ENCODE measurements at regions of chr11 and their contacts with region 1.

Region 1: GRCh38 chr11:44868455-44869421 is 81.9 kb downstream of the TP53I11 start:
- DNase-seq: no peak
- ATAC-seq: peak; percentile 61

Region 2: DNA sequence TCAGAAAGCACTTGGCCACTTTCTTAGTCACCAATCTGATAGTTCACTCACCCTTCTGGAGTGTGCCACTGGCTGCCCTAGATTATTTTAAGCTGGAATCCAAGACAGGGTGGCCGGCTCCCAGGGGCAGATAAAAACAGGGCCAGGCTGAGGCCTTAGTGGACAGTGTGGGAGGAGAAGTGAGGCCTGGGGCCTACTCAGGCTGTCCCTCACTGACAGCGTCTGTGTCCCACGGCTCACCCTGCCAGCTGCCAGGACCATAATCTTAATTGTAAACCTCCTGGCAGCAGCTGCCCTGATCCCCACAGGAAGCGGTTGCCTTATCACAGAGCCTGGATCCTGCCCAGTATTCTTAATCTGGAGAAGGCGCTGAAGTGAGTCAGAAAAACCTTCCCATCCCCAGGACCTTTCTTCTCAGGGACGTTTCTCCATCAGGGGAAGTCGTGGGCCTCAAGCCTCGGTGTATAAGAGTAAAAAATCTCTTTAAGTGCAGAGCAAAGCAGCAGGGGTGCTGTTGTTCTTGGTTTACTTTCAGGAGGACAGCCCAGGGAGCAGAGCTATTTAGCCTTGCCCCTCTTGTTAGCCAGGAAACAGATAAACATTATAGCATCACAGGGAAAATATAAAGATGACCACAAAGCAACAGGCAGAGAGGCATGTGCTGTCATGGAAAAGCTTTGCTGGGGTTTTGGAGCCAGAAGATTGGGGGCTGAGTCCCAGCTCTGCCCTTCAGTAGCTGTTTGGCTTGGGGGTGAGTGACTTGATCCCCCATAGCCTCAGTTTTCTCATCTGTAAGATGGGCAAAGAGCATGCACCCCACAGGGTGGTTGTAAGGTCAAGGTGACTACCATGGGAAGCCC is 102.4 kb before region 1 on chr11:
- intact Hi-C with region 1: loop called (anchors 2 kb)
- DNase-seq: peak; percentile 85
- ATAC-seq: peak; percentile 86